Ascending aorta (tissue), 2 donors: ENCODE measurements at regions of chr2 and their contacts with region 1.

Region 1: GRCh38 chr2:190698895-190699294 is 50.0 kb downstream of the NAB1 start:
- DNase-seq: no peak
- H3K4me3 ChIP-seq: no peak overlapping the region
- H3K27ac ChIP-seq: no peak overlapping the region
- H3K4me1 ChIP-seq: no peaks in the 10 kb centered on the region
- H3K27me3 ChIP-seq: no peaks in the 10 kb centered on the region
- CTCF ChIP-seq: peak in 1 of 3 experiments; percentile 4

Region 2: GRCh38 chr2:190599073-190599472 is 99.8 kb before region 1 on chr2:
- intact Hi-C with region 1: loop called (anchors 5 kb)
- DNase-seq: no peak
- H3K4me3 ChIP-seq: no peak overlapping the region
- H3K27ac ChIP-seq: no peak overlapping the region
- H3K4me1 ChIP-seq: peaks cover 0 to 9% of the 10 kb centered on the region in 2 donors
- H3K27me3 ChIP-seq: no peaks in the 10 kb centered on the region
- CTCF ChIP-seq: no peak

Region 3: GRCh38 chr2:190736355-190736754 is 37.5 kb after region 1 on chr2:
- intact Hi-C with region 1: no loop called
- DNase-seq: no peak
- H3K4me3 ChIP-seq: no peak overlapping the region
- H3K27ac ChIP-seq: no peak overlapping the region
- H3K4me1 ChIP-seq: no peaks in the 10 kb centered on the region
- H3K27me3 ChIP-seq: no peaks in the 10 kb centered on the region
- CTCF ChIP-seq: no peak